ENCODE measurements at regions of chr1 and their contacts with region 1.

Region 1: DNA sequence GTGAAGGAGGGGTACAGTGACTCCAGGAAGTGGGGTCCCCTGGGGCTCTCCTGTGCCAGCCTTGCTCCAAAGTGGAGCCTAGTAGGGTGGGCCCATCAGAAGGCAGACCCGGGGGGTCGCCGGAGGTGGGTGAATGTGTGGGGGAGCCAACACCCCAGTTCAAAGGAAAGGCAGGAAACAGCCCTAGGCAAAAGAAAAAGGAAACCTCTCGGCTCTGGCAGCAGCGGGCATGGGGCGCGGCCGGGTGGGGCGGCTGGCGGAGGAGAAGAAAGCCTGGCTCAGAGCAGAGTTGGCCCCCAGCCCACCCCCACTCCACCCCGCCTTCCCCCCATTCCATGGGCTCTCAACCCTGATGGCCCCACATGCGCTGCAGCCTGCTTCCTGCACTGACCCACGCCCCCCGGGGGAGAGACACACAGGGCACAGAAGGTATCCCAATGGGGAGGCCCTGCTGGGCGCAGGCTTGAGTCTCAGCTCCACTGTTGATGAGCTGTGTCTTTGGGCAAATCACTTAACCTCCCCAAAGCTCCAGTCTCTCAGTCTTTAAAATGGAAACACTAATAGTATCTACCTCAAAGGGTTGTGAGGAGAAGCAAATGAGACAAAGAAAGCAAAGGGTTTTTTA is 5.8 kb downstream of the LGR6 start:
- DNase-seq: peak; percentile 26 to 47
- H3K4me3 ChIP-seq: no peak overlapping the region
- H3K27ac ChIP-seq: no peak overlapping the region
- H3K4me1 ChIP-seq: peaks cover 7 to 14% of the 10 kb centered on the region in 2 donors
- H3K27me3 ChIP-seq: no peaks in the 10 kb centered on the region
- CTCF ChIP-seq: no peak
- POLR2A ChIP-seq: no peak

Region 2: GRCh38 chr1:202122639-202123335 is 76.6 kb before region 1 on chr1 and contains the start of gene GPR37L1:
- intact Hi-C with region 1: no loop called
- DNase-seq: peak; percentile 92 to 93
- H3K4me3 ChIP-seq: no peak within 1 kb of the TSS
- H3K27ac ChIP-seq: peak within 1 kb of the TSS; percentile 24 to 61 (median 40)
- H3K4me1 ChIP-seq: peaks cover 9 to 18% of the 10 kb centered on the region in 2 donors
- H3K27me3 ChIP-seq: no peaks in the 10 kb centered on the region
- CTCF ChIP-seq: peak; percentile 42 to 83 (median 72)
- POLR2A ChIP-seq: no peak
- total RNA-seq, gene GPR37L1: 0.22 to 0.34 TPM in 2 of 4 donors, not detected in the others

Region 3: GRCh38 chr1:202315576-202316168 is 116.3 kb after region 1 on chr1:
- intact Hi-C with region 1: loop called (anchors 5 kb)
- DNase-seq: peak; percentile 79 to 84
- H3K4me3 ChIP-seq: no peak overlapping the region
- H3K27ac ChIP-seq: no peak overlapping the region
- H3K4me1 ChIP-seq: no peaks in the 10 kb centered on the region
- H3K27me3 ChIP-seq: no peaks in the 10 kb centered on the region
- CTCF ChIP-seq: peak; percentile 62 to 93 (median 90)
- POLR2A ChIP-seq: no peak

Region 4: DNA sequence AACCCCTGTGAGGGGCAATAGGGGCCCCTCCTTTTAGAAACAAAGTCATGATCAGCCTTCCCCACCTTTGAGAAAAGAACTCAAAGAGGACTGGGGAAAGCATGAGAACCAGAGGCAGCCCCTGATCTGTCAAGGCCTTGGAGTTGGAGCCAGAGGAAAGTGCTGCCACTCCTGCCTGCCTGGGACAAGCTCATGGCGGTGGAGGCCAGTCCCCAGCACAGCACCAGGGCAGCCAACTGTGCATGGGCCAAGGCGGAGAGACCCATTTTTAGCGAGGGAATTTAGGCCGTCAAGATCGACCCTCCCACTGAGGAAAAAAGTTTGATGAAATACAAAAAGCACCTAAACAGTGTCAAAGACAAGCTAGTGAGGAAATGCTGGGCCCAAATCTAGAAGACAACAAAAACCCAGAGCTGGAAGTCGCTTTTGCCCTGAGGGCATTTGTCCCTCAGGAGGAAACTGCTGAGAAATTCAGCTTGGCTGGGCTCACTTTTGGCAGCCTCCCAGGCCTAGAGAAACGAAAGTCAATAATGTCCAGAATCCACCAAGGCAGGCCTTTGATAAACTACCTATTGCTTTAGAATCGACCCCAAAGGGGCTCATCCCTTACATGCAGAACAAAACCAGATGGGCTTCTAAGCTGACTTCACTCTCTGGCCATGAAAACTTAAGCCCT is 471.9 kb after region 1 on chr1:
- intact Hi-C with region 1: no loop called
- DNase-seq: peak; percentile 11 to 39
- H3K4me3 ChIP-seq: no peak overlapping the region
- H3K27ac ChIP-seq: no peak overlapping the region
- H3K4me1 ChIP-seq: no peaks in the 10 kb centered on the region
- H3K27me3 ChIP-seq: no peaks in the 10 kb centered on the region
- CTCF ChIP-seq: no peak
- POLR2A ChIP-seq: no peak

Measured in thyroid gland (tissue), 4 donors.